ENCODE measurements at regions of chr12 and their contacts with region 1.

Region 1: GRCh38 chr12:89709157-89709994 is 738 bp upstream of the ATP2B1 start:
- DNase-seq: peak; percentile 98
- H3K4me3 ChIP-seq: peak overlapping the region; percentile 94
- H3K27ac ChIP-seq: peak overlapping the region; percentile 87
- H3K4me1 ChIP-seq: peaks cover 33% of the 10 kb centered on the region
- CTCF ChIP-seq: no peak

Region 2: DNA sequence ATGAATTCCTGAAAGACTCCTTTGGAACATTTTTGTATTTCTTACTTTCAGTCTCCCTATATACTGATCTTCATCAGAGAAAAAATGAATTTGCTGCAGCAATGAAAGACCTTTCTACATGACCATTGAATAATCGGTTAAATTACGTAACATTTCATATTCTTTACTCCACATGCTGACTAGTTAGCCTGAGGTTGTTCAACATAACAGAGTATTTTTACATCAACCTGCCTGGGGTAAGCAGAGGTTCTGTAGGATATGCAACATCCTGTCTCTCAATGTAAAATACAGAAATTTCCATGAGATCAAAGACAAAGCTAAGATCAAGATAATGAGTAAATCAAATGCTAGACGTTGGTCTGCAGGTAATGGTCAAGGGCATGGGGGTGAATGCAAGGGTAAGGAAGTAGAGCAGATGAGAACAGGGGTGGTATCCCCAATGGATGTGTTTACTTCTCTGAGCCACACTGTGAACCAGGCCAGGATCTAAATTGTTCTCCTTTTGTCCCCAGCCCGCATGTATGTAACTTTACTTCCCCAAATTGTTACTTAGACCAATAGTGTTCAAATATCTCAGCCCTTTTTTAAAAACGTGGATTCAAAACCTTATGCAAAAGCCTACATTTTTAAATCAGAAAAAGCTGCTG is 402.4 kb before region 1 on chr12:
- CTCF ChIA-PET with region 1: no interaction called
- POLR2A ChIA-PET with region 1: no interaction called
- intact Hi-C with region 1: no loop called
- DNase-seq: no peak
- H3K4me3 ChIP-seq: no peak overlapping the region
- H3K27ac ChIP-seq: no peak overlapping the region
- H3K4me1 ChIP-seq: no peaks in the 10 kb centered on the region
- CTCF ChIP-seq: no peak

Region 3: DNA sequence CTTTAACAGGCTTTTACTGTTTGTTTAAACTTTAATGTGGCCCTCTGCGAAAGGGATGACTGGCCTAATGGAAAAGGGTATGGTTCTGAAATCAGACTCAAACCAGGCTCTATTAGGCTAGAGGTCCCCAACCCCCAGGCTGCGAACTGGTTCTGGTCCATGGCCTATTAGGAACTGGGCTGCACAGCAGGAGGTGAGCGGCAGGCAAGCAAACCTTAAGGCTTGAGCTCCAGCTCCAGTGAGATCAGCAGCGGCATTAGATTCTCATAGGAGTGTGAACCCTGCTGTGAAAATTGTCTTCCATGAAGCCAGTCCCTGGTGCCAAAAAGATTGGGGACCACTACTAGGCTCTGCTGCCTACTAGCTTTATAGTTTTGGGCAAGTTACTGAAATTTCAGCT is 195.8 kb before region 1 on chr12:
- CTCF ChIA-PET with region 1: no interaction called
- POLR2A ChIA-PET with region 1: no interaction called
- intact Hi-C with region 1: no loop called
- DNase-seq: no peak
- H3K4me3 ChIP-seq: no peak overlapping the region
- H3K27ac ChIP-seq: no peak overlapping the region
- H3K4me1 ChIP-seq: no peaks in the 10 kb centered on the region
- CTCF ChIP-seq: no peak

Region 4: GRCh38 chr12:89524541-89525285 is 184.7 kb before region 1 on chr12 and contains the start of gene GALNT4:
- CTCF ChIA-PET with region 1: no interaction called
- POLR2A ChIA-PET with region 1: interaction called, 4 read pairs
- intact Hi-C with region 1: loop called (anchors 2 kb)
- DNase-seq: peak; percentile 86
- H3K4me3 ChIP-seq: peak within 1 kb of the TSS; percentile 94
- H3K27ac ChIP-seq: peak within 1 kb of the TSS; percentile 77
- H3K4me1 ChIP-seq: peaks cover 31% of the 10 kb centered on the region
- CTCF ChIP-seq: peak; percentile 75
- total RNA-seq, gene GALNT4: 2.1 and 3.8 TPM in 2 replicates

Region 5: DNA sequence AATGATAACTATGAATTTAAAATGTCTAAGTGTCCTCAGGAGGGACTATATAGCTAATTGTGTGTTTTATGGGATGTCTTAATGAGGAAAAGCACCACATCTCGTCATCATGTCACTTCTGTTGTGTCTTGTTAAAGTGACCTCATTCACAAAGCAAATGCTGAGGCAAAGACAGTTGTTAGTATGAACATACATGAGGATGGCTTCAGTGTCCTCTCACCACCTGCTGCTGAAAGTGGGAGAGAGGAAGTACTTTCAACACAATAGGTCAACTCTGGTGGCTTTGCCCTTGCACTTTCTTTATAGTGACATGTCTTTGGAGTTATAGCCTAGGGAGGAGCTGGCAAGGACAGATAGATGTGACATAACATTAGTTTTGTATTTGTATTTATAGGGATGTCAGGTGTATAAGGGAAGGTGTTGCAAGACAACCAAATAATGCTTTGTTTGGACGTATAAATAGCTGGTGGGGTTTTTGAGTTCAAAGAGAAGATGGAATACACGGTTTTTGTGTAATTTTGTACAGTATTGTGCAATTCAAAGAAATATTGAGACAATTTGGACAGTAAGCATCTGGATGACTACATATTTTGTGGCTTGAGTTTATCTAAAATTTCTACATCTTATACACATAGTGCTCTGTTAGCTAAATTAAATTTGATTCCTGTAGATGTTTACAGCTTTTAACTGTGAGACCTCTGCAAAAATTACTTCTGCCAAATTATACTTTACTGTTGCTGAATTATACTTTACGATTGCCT is 131.0 kb after region 1 on chr12:
- CTCF ChIA-PET with region 1: no interaction called
- POLR2A ChIA-PET with region 1: interaction called, 6 read pairs
- intact Hi-C with region 1: loop called (anchors 5 kb)
- DNase-seq: peak; percentile 81
- H3K4me3 ChIP-seq: peak overlapping the region; percentile 12
- H3K27ac ChIP-seq: peak overlapping the region; percentile 69
- H3K4me1 ChIP-seq: peaks cover 32% of the 10 kb centered on the region
- CTCF ChIP-seq: no peak

Region 6: DNA sequence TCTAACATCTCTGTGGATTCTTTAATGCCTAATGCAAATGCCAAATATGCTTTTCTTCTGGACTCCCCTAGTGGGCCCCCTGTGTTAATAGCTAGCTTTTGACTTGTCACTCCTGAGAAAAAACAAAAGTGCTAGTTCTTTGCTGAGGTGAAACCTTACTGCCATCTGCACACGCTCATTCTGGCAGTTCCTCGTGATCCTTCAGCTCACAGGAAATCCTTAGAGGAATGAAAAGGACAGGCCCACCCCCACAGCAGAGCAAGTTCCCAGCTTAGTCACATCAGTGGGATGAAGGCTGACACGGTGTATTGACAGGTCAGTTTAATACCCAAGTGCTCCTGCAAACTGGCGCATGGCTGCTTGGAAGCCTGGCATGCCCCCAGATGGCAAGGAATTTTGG is 164.4 kb after region 1 on chr12:
- CTCF ChIA-PET with region 1: no interaction called
- POLR2A ChIA-PET with region 1: interaction called, 3 read pairs
- intact Hi-C with region 1: loop called (anchors 5 kb)
- DNase-seq: peak; percentile 27
- H3K4me3 ChIP-seq: no peak overlapping the region
- H3K27ac ChIP-seq: no peak overlapping the region
- H3K4me1 ChIP-seq: peaks cover 19% of the 10 kb centered on the region
- CTCF ChIP-seq: peak; percentile 44

Region 7: GRCh38 chr12:90076851-90077319 is 367.5 kb after region 1 on chr12:
- CTCF ChIA-PET with region 1: no interaction called
- POLR2A ChIA-PET with region 1: interaction called, 8 read pairs
- intact Hi-C with region 1: loop called (anchors 2 kb)
- DNase-seq: peak; percentile 82
- H3K4me3 ChIP-seq: no peak overlapping the region
- H3K27ac ChIP-seq: peak overlapping the region; percentile 87
- H3K4me1 ChIP-seq: peaks cover 66% of the 10 kb centered on the region
- CTCF ChIP-seq: no peak

Measured in OCI-LY7 (cell line).